ENCODE measurements at regions of chr2 and their contacts with region 1.

Region 1: GRCh38 chr2:3692381-3692780 is 11.0 kb upstream of the DCDC2C start:
- DNase-seq: peak in 1 of 2 experiments; percentile 24
- H3K4me3 ChIP-seq: no peak overlapping the region
- H3K4me3 Mint-ChIP-seq: no peak overlapping the region
- H3K27ac Mint-ChIP-seq: no peak overlapping the region
- H3K4me1 ChIP-seq: no peaks in the 10 kb centered on the region
- H3K4me1 Mint-ChIP-seq: no peaks in the 10 kb centered on the region
- H3K27me3 ChIP-seq: no peaks in the 10 kb centered on the region
- H3K27me3 Mint-ChIP-seq: peaks cover 18% of the 10 kb centered on the region
- CTCF ChIP-seq: peak; percentile 6 to 23

Region 2: DNA sequence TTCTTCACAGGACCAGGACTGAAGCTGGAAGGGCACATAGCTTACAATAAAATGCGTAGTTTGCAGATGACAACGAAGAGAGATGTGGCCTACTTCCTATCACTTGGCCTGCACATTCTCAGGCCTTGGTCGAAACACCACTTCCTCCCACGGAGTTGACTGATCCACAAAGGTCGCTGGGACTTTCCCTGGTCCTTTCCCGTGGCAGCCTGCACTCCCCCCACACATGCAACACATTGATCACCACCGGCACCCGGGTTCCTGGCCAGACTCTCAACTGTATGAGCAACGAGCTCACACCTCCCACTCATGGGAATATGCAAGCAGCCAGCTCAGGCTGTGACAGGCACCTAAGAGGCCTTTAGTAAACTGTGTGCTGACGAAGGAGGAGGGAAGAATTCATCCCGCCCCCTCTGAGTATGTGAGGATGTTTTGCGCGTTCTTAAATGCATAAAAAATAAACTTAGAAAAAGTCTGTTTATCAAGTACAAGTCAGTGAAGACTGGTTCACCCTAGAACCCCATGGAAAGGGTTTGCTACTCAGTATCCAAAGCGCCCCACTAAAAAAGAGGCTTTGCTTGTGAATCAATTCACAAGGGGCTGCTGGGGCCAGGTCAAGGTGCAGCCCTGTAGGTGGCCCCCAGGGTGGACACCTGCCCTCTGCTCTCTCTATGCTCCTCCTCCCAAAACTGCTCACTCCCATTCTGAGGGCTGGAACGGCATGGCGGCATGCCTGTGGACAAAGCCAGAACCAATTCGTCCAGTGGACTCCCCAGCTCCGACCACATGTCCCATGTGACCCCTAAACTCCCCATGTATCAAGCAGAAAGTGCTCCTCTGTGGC is 469.1 kb before region 1 on chr2:
- CTCF ChIA-PET with region 1: no interaction called
- POLR2A ChIA-PET with region 1: no interaction called
- intact Hi-C with region 1: no loop called
- DNase-seq: no peak
- H3K4me3 ChIP-seq: no peak overlapping the region
- H3K4me3 Mint-ChIP-seq: no peak overlapping the region
- H3K27ac Mint-ChIP-seq: no peak overlapping the region
- H3K4me1 ChIP-seq: no peaks in the 10 kb centered on the region
- H3K4me1 Mint-ChIP-seq: no peaks in the 10 kb centered on the region
- H3K27me3 ChIP-seq: no peaks in the 10 kb centered on the region
- H3K27me3 Mint-ChIP-seq: no peaks in the 10 kb centered on the region
- CTCF ChIP-seq: no peak

Region 3: GRCh38 chr2:3780477-3781402 is 88.4 kb after region 1 on chr2:
- CTCF ChIA-PET with region 1: interaction called, 6 read pairs
- POLR2A ChIA-PET with region 1: no interaction called
- intact Hi-C with region 1: loop called (anchors 1 kb)
- DNase-seq: peak; percentile 54
- H3K4me3 ChIP-seq: no peak overlapping the region
- H3K4me3 Mint-ChIP-seq: no peak overlapping the region
- H3K27ac Mint-ChIP-seq: no peak overlapping the region
- H3K4me1 ChIP-seq: no peaks in the 10 kb centered on the region
- H3K4me1 Mint-ChIP-seq: no peaks in the 10 kb centered on the region
- H3K27me3 ChIP-seq: no peaks in the 10 kb centered on the region
- H3K27me3 Mint-ChIP-seq: peaks cover 26% of the 10 kb centered on the region
- CTCF ChIP-seq: peak; percentile 19 to 69

Region 4: DNA sequence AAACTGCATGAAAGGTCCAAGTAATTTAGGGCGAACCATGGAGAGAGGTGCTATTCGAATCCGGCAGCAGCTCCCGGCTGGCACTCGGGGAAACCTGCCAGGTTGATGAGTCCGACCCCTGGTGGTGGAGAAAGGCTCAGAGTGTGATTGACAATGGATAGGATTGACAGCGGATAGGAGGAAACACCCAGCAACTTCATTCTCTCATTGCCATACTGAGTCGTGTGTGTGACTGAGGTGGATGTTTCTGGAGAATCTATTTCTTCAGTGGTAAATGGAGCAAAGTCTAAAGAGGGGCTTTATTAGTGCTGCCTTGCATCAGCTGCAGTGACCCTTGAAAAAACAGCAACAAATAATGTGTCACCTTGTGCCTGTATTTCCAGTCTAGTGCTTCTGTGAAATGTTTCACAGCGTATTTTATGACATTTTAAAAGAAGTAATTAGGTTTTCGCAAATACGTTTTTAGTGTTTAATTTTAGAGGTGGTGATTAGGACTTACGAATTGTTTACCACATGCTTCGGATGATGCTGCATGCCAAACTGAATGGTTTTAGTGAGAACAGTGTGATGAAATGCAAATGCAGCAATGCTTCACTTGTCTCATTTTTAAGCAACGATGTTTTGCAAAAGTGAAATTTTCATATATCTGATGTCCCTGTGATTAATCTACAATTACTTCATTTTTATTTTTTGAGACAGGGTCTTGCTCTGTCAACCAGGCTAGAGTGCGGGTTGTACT is 113.0 kb after region 1 on chr2:
- CTCF ChIA-PET with region 1: interaction called, 3 read pairs
- POLR2A ChIA-PET with region 1: no interaction called
- intact Hi-C with region 1: loop called (anchors 2 kb)
- DNase-seq: peak; percentile 54 to 58
- H3K4me3 ChIP-seq: no peak overlapping the region
- H3K4me3 Mint-ChIP-seq: no peak overlapping the region
- H3K27ac Mint-ChIP-seq: no peak overlapping the region
- H3K4me1 ChIP-seq: no peaks in the 10 kb centered on the region
- H3K4me1 Mint-ChIP-seq: no peaks in the 10 kb centered on the region
- H3K27me3 ChIP-seq: no peaks in the 10 kb centered on the region
- H3K27me3 Mint-ChIP-seq: peaks cover 4% of the 10 kb centered on the region
- CTCF ChIP-seq: peak; percentile 41 to 66

Measured in Caco-2 (cell line).